ENCODE measurements at regions of chr2 and their contacts with region 1.

Region 1: GRCh38 chr2:23824777-23825212 is 102.1 kb downstream of the ATAD2B start:
- DNase-seq: no peak
- H3K4me3 ChIP-seq: no peak overlapping the region
- H3K27ac ChIP-seq: no peak overlapping the region
- H3K27me3 ChIP-seq: no peaks in the 10 kb centered on the region
- CTCF ChIP-seq: peak; percentile 35 to 84 (median 72)

Region 2: GRCh38 chr2:23487735-23488510 is 336.9 kb before region 1 on chr2:
- intact Hi-C with region 1: no loop called
- DNase-seq: no peak
- H3K4me3 ChIP-seq: no peak overlapping the region
- H3K27ac ChIP-seq: no peak overlapping the region
- H3K27me3 ChIP-seq: peaks cover 0 to 10% (median 0%) of the 10 kb centered on the region in 45 donors
- CTCF ChIP-seq: no peak

Region 3: DNA sequence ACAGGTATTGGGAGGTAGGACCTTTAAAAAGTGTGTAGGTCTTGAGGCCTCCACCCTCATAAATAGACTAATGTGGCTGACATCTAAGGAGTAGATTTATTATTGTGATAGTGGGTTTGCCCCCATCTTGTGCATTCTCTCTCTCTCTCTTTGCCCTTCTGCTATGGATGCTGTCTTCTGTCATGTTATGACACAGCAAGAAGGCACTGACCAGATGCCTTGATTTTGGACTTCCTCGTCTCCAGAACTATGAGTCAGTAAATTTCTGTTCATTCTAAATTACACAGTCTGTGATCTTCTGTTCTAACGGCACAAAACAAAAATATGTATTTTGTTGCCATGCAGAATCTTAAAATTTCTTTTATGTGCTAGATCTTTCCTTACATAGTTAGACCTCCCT is 35.2 kb after region 1 on chr2:
- intact Hi-C with region 1: no loop called
- DNase-seq: no peak
- H3K4me3 ChIP-seq: no peak overlapping the region
- H3K27ac ChIP-seq: no peak overlapping the region
- H3K27me3 ChIP-seq: no peaks in the 10 kb centered on the region
- CTCF ChIP-seq: no peak

Region 4: DNA sequence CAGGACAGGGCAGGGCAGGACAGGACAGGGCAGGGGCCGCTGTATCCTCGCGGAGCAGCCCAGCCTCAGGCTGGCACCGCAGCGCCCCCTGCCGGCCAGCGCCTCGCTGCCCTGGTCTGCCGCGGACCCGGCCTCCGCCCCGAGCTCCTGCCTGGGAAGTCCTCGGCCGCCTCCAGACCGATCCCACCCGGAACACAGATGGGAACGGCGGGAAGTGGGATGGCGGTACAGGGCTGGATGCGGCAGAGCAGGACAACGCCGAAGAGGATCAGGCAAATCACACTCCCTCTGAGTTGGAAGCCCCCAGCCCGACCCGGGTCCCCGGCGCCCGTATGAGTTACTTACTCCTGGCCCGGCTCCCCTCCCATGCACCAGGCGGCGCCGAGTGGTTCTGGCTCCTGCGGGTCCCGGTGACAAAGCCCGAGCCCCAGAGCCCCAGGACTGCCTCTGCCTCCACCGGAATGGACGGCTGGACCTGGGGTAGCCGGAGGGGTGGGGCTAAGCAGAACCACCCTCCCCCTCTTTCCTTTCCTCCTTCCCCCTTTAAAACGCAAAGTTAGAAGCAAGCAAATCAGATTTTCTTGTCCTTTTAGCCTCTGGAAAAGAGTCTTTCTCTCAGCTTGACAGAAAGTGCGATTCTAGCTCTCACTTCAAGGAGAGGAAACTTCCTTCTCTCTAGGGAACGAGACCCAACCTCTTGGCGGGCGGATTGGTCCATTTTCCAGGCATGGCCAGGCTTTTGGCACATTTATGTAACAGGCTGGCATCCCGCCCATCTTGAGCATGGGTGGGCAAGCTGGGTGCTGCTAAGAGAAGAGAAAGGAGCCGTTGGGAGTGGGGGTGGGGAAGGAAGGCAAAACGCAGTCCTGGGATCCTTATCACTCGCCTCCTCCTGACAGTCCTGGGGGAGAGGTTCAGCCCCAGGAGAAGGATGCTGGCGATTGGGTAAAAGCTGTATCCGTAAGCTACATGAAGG is 259.9 kb after region 1 on chr2 and contains the start of gene TP53I3:
- intact Hi-C with region 1: loop called (anchors 2 to 5 kb)
- DNase-seq: peak; percentile 59 to 89 (median 77)
- H3K4me3 ChIP-seq: peak within 1 kb of the TSS; percentile 39 to 81 (median 68)
- H3K27ac ChIP-seq: peak within 1 kb of the TSS in 57 of 59 donors; percentile 30 to 90 (median 80)
- H3K27me3 ChIP-seq: no peaks in the 10 kb centered on the region
- CTCF ChIP-seq: peak; percentile 68 to 99 (median 92)
- total RNA-seq, gene TP53I3: 0.39 to 11.1 (median 4.0) TPM

Measured in dorsolateral prefrontal cortex (tissue), 120 donors.